GM12878 (cell line): ENCODE measurements at regions of chr5 and their contacts with region 1.

Region 1: GRCh38 chr5:141512390-141512910 is 23.6 kb downstream of the PCDHGC5 start:
- DNase-seq: no peak
- ATAC-seq: peak; percentile 44
- H3K4me3 ChIP-seq: peak overlapping the region; percentile 69
- H3K27ac ChIP-seq: peak overlapping the region; percentile 90
- H3K4me1 ChIP-seq: peaks cover 76% of the 10 kb centered on the region
- H3K27me3 ChIP-seq: no peaks in the 10 kb centered on the region
- CTCF ChIP-seq: peak; percentile 81 to 94 (median 89)
- EP300 ChIP-seq: no peak
- POLR2A ChIP-seq: no peak; the same call in 1 of the 2 replicates
- RAD21 ChIP-seq: peak; percentile 69

Region 2: DNA sequence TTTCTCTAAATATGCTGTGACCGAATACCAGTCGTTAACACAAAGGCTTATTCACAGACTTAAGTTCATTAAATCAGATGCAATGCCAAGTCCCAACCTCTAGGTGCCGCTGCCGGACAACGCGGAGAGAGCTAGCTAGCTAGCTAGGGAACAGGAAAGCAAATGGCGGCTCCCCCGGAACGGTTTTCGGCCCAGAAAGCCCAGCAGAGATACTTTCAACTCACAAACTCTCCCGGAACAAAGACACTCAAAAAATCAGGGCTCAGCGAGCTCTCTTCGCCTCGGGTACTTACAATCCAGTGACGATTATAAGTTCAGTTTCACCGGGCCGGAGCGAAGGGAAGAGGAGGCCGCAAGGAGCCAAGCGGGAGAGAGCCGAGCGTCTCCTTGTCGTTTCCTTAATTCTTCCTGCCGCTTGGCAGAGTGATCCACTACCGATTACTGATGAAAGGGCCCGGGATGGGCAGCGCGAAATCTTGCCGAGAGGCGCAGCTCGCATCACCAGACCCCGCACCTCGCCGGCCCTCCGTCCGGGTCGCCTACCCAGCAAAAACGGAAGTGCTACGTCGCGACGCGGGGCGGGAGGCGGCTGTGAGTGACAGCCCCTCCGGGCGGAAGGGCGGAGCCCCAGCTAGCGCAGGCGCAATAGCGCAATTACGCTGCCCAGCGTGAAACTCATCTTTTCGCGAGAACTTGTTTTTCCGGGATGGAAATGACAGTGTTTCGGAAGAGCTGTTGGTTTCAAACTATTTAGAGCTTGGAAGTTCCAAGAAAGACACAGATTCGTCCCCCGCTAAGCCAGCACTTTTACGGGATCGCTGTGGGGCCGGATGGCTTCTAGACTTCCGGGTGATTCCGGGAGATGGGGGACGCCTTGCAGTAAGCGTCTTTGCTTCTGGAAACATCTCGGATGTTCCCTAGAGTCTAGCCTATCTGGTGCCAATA is 192.0 kb before region 1 on chr5 and contains the start of gene TAF7:
- CTCF ChIA-PET with region 1: interaction called, 18 read pairs
- POLR2A ChIA-PET with region 1: no interaction called
- RAD21 ChIA-PET with region 1: no interaction called
- SMC1A ChIA-PET with region 1: no interaction called
- in situ Hi-C with region 1: no loop called
- intact Hi-C with region 1: no loop called
- DNase-seq: peak; percentile 72
- ATAC-seq: peak; percentile 96
- H3K4me3 ChIP-seq: peak within 1 kb of the TSS; percentile 81
- H3K27ac ChIP-seq: peak within 1 kb of the TSS; percentile 96
- H3K4me1 ChIP-seq: no peaks in the 10 kb centered on the region
- H3K27me3 ChIP-seq: no peaks in the 10 kb centered on the region
- CTCF ChIP-seq: peak; percentile 81 to 93 (median 90)
- EP300 ChIP-seq: no peak
- POLR2A ChIP-seq: peak; percentile 99
- RAD21 ChIP-seq: peak; percentile 70
- polyA plus RNA-seq, gene TAF7: 43.2 to 69.1 TPM

Region 3: DNA sequence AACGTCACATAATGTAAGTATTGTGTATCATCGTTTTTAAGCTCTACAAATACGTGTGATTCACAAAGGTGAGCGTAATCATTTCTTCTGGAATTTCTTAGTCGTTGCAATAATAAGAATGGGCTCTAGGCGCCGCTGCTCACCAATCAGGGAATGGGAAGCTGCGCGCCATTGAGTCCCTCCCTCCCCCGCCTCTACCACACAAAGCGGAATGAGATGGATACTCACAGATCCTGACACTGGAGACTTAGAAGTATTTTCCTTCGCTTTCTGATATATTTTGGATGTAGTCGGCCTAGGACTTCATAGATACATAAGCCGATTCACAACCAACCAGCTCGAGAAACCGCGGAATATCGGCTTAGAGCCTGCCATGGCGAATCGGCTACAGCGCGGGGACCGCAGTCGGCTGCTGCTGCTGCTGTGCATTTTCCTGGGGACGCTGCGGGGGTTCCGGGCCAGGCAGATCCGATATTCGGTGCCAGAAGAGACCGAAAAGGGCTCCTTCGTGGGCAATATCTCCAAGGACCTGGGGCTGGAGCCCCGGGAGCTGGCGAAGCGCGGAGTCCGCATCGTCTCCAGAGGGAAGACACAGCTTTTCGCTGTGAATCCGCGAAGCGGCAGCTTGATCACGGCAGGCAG is 91.5 kb before region 1 on chr5 and contains the start of gene PCDHGA11:
- CTCF ChIA-PET with region 1: interaction called, 46 read pairs
- POLR2A ChIA-PET with region 1: no interaction called
- RAD21 ChIA-PET with region 1: interaction called, 13 read pairs
- SMC1A ChIA-PET with region 1: interaction called, 10 read pairs
- in situ Hi-C with region 1: no loop called
- intact Hi-C with region 1: loop called (anchors 2 kb)
- DNase-seq: peak; percentile 37
- ATAC-seq: peak; percentile 77
- H3K4me3 ChIP-seq: peak within 1 kb of the TSS; percentile 76
- H3K27ac ChIP-seq: no peak within 1 kb of the TSS
- H3K4me1 ChIP-seq: peaks cover 4% of the 10 kb centered on the region; the same call in 1 of the 2 replicates
- H3K27me3 ChIP-seq: no peaks in the 10 kb centered on the region; a peak in 1 of 4 replicates
- CTCF ChIP-seq: peak; percentile 83 to 89 (median 89)
- EP300 ChIP-seq: no peak
- POLR2A ChIP-seq: no peak
- RAD21 ChIP-seq: peak; percentile 82
- polyA plus RNA-seq, gene PCDHGA11: 0.21 to 0.31 TPM

Region 4: GRCh38 chr5:141475625-141476131 is 36.8 kb before region 1 on chr5 and contains the start of gene PCDHGC3:
- CTCF ChIA-PET with region 1: interaction called, 213 read pairs
- POLR2A ChIA-PET with region 1: interaction called, 4 read pairs
- RAD21 ChIA-PET with region 1: interaction called, 109 read pairs
- SMC1A ChIA-PET with region 1: interaction called, 117 read pairs
- in situ Hi-C with region 1: no loop called
- intact Hi-C with region 1: loop called (anchors 1 kb)
- DNase-seq: peak; percentile 40
- ATAC-seq: peak; percentile 97
- H3K4me3 ChIP-seq: peak within 1 kb of the TSS; percentile 77
- H3K27ac ChIP-seq: no peak within 1 kb of the TSS; the same call in 1 of the 2 replicates
- H3K4me1 ChIP-seq: peaks cover 17% of the 10 kb centered on the region
- H3K27me3 ChIP-seq: no peaks in the 10 kb centered on the region; a peak in 1 of 4 replicates
- CTCF ChIP-seq: peak; percentile 49 to 86 (median 65); a peak in 5 of 6 replicates
- EP300 ChIP-seq: no peak
- POLR2A ChIP-seq: no peak
- RAD21 ChIP-seq: peak; percentile 77
- polyA plus RNA-seq, gene PCDHGC3: 0.53 to 0.60 TPM

Region 5: DNA sequence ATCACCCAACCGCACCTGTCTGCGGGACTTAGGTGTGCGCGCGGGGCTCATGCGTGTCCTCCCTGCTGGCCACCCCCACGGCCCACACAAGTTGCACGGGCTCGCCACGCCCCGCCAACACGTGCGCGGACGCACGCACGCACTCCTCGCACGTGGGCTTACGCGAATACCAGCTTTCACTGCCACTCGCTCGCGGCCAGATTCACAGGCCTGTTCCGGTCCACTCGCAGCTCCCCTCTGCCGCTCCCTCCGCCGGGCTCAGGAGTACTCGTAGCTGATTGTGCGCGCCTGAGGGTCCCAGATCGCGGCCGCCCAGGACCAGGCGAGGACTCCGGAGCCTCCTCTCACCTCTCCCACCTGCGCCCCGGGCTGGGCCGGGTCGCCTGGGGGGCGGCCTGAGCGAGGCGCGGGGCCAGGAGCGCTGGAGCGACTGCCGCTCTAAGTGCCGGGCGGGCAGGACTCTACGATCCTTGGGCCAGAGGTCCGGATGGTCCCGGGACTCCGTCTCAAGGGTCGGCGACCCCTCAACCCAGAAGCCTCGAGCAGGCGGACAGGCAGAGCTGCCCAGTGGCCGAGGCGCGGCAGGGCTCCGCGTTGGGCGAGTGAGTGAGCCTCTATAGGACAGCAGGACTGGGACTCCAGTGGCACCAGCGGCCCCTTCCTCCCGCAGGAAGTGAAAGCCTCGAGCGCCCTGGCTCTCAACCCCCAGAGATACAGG is 20.1 kb before region 1 on chr5:
- CTCF ChIA-PET with region 1: interaction called, 90 read pairs
- POLR2A ChIA-PET with region 1: interaction called, 5 read pairs
- RAD21 ChIA-PET with region 1: interaction called, 8 read pairs
- SMC1A ChIA-PET with region 1: interaction called, 3 read pairs
- in situ Hi-C with region 1: no loop called
- intact Hi-C with region 1: no loop called
- DNase-seq: no peak
- ATAC-seq: peak; percentile 78
- H3K4me3 ChIP-seq: peak overlapping the region; percentile 65
- H3K27ac ChIP-seq: no peak overlapping the region
- H3K4me1 ChIP-seq: peaks cover 24% of the 10 kb centered on the region
- H3K27me3 ChIP-seq: no peaks in the 10 kb centered on the region; a peak in 1 of 4 replicates
- CTCF ChIP-seq: no peak
- EP300 ChIP-seq: no peak
- POLR2A ChIP-seq: peak; percentile 76
- RAD21 ChIP-seq: no peak

Region 6: DNA sequence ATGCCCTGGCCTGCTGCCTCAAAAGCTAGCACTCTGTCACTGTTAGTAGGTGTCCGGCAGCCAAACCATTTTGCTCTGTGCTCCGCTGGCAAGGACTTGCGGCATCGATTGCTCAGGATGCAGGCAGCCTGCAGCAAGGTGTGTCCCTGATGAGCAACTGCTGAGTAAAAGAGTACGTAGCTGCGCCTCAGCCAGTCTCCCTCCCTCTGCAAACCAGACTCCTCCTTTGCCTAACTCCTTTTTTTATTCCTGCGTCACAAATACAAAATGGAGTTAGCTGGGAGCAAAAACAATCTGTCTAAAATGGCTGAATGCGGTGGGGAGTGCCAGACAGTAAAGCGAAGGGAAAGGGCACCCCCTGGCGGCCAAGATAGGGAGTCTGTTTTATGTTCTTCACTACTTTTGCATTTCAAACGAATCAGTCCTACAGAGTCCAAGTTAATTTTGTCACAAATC is 45.3 kb after region 1 on chr5:
- CTCF ChIA-PET with region 1: interaction called, 46 read pairs
- POLR2A ChIA-PET with region 1: no interaction called
- RAD21 ChIA-PET with region 1: interaction called, 12 read pairs
- SMC1A ChIA-PET with region 1: interaction called, 19 read pairs
- in situ Hi-C with region 1: no loop called
- intact Hi-C with region 1: no loop called
- DNase-seq: peak; percentile 43
- ATAC-seq: peak; percentile 96
- H3K4me3 ChIP-seq: no peak overlapping the region
- H3K27ac ChIP-seq: peak overlapping the region; percentile 22; the same call in 1 of the 2 replicates
- H3K4me1 ChIP-seq: no peaks in the 10 kb centered on the region
- H3K27me3 ChIP-seq: no peaks in the 10 kb centered on the region
- CTCF ChIP-seq: peak; percentile 72 to 82 (median 78)
- EP300 ChIP-seq: no peak
- POLR2A ChIP-seq: 0 out of 2 replicates have a peak, but pooled peaks have one; percentile 32
- RAD21 ChIP-seq: peak; percentile 96

Region 7: GRCh38 chr5:142576303-142576702 is 1063.9 kb after region 1 on chr5:
- CTCF ChIA-PET with region 1: no interaction called
- POLR2A ChIA-PET with region 1: no interaction called
- RAD21 ChIA-PET with region 1: no interaction called
- SMC1A ChIA-PET with region 1: no interaction called
- in situ Hi-C with region 1: no loop called
- intact Hi-C with region 1: no loop called
- DNase-seq: no peak
- ATAC-seq: no peak
- H3K4me3 ChIP-seq: no peak overlapping the region
- H3K27ac ChIP-seq: no peak overlapping the region
- H3K4me1 ChIP-seq: no peaks in the 10 kb centered on the region
- H3K27me3 ChIP-seq: no peaks in the 10 kb centered on the region
- CTCF ChIP-seq: no peak
- EP300 ChIP-seq: no peak
- POLR2A ChIP-seq: no peak
- RAD21 ChIP-seq: no peak